HEK293 (cell line): ENCODE measurements at regions of chr1 and their contacts with region 1.

Region 1: GRCh38 chr1:155250633-155251449 is 4.4 kb downstream of the ENTREP3 start:
- H3K4me3 ChIP-seq: no peak overlapping the region
- H3K27ac ChIP-seq: peak overlapping the region; percentile 8
- H3K4me1 ChIP-seq: no peaks in the 10 kb centered on the region
- CTCF ChIP-seq: peak; percentile 99

Region 2: DNA sequence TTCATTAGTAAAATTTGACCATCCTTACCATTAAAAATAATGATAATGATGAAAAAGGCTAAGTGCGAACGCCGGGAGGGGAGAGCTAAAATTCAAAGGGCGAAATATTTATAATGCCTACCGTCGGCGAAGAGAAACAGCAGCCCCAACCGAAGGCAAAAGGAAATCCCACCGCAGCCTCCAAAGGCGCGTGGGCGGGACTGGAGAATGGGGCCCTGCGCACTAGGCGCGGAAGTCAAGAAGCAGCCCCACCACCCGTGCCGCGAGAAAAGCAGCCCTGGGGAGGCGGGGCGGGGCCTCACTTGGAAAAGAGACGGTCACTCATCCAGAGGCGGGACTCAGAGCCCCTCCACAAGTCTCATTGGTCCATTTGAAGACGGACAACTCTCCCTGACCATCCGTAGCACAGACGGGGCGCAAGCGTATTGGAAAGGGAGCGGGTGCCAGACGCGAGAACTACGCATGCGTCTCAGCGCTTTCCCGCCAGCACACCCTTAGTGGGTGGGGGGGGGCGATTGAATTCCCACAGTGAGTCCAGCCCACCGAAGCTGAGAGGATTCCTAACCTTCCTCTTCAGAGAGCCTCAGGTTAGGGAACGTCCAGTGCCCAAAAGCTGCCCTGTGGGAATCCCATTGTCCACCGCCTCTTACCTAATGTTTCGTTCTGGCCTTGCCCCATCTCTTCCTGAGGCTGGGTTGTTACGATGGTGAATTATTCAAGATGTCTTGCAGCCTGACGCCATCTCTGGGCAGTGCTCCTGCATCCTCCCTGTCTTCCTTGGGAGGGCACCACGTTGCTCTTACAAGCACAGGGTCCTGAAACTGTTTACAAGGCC is 23.4 kb before region 1 on chr1:
- CTCF ChIA-PET with region 1: interaction called, 18 read pairs
- POLR2A ChIA-PET with region 1: interaction called, 4 read pairs
- H3K4me3 ChIP-seq: peak overlapping the region; percentile 53
- H3K27ac ChIP-seq: peak overlapping the region; percentile 76
- H3K4me1 ChIP-seq: peaks cover 3% of the 10 kb centered on the region
- CTCF ChIP-seq: no peak

Region 3: DNA sequence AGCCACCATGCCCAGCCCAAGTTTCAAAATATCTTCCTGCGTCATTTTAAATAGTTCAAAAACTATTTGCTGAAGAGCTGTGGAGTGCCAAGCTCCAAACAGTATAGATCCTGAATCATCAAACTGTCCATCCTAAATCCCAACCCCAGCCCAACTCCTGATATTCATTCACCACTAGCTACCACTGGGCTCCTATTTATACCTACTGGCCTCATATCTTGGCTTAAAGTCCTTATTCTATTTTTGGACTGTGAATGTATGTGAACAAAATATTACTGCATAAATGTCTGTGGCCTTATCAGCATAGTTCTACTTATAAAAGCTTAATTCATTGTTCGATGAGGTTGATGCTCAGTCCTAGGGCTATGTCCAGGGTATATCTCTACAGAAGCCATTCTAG is 16.5 kb after region 1 on chr1:
- CTCF ChIA-PET with region 1: interaction called, 91 read pairs
- POLR2A ChIA-PET with region 1: interaction called, 28 read pairs
- H3K4me3 ChIP-seq: no peak overlapping the region
- H3K27ac ChIP-seq: no peak overlapping the region
- H3K4me1 ChIP-seq: no peaks in the 10 kb centered on the region
- CTCF ChIP-seq: no peak

Region 4: DNA sequence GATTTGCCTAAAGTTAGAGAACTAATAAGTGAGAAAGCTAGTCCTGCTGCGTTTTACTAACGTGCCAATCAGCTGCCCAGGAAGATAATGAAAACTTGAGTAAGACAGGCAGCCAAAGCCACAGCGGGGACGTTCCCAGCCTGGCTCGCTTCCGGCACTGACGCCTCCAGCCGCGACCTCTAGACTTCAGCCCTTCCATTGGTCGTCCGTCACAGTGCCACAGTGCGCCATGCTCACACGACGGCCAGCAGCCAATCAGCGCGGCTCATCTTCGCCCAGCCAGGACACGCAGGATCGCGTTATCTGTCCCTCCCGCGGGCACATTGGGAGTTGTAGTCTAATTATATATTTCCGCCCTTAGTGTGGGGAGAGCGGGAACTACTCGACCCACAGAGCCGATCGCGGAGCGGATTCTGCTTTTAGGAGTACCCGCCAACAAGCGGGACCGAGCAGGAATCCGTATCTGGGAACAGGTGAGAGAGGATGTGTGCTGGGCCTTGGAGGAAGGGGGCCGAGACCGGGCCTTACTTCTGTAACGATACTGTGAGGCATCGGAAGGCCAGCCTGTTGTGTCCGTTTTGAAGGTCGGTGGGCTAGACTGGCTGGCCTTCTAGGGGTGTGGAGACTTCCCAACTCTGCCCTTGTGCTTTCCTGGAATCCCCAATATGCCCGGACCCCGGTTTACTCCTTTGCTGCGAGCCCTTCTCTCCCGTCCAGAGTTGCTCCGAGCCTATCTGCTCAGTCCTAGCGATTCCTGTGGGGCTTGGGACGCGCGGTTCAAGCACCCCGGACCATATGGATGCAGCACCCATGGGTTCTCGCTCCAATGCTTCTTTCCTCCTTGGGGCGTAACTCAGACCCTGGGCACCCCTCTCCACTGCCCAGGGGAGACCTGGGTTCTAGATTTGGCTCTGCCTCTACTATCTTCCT is 57.9 kb after region 1 on chr1 and contains the start of gene FDPS:
- CTCF ChIA-PET with region 1: interaction called, 35 read pairs
- POLR2A ChIA-PET with region 1: interaction called, 4 read pairs
- H3K4me3 ChIP-seq: peak within 1 kb of the TSS; percentile 67
- H3K27ac ChIP-seq: peak within 1 kb of the TSS; percentile 88
- H3K4me1 ChIP-seq: peaks cover 5% of the 10 kb centered on the region; the same call in 1 of the 2 replicates
- CTCF ChIP-seq: no peak

Region 5: GRCh38 chr1:155323798-155324610 is 73.2 kb after region 1 on chr1:
- CTCF ChIA-PET with region 1: interaction called, 77 read pairs
- POLR2A ChIA-PET with region 1: interaction called, 26 read pairs
- H3K4me3 ChIP-seq: peak overlapping the region; percentile 86
- H3K27ac ChIP-seq: peak overlapping the region; percentile 85
- H3K4me1 ChIP-seq: 0 out of 2 replicates have a peak, but pooled peaks cover 3% of the 10 kb centered on the region
- CTCF ChIP-seq: no peak

Region 6: DNA sequence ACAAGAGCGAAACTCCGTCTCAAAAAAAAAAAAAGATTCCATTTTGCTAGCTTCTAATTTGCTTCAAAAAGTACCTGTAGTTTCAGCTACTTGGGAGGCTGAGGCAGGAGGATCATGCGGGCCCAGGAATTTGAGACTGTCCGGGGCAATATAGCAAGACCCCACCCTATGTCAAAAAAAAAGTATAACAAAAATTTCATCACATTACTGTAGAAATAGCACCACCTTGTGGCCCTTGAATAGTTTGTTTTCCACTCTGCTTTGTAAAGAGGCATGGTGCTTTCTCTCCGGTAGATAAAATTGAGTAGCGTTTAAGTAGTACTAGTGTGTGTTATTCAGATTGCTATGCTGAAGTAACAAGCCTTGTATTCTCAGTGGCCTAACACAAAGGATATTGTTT is 340.9 kb after region 1 on chr1:
- CTCF ChIA-PET with region 1: interaction called, 47 read pairs
- POLR2A ChIA-PET with region 1: no interaction called
- H3K4me3 ChIP-seq: no peak overlapping the region
- H3K27ac ChIP-seq: no peak overlapping the region
- H3K4me1 ChIP-seq: no peaks in the 10 kb centered on the region
- CTCF ChIP-seq: no peak